Testis (tissue), 5 donors: ENCODE measurements at regions of chr2 and their contacts with region 1.

Region 1: GRCh38 chr2:221573430-221574230 is 1.5 kb upstream of the EPHA4 start:
- DNase-seq: peak; percentile 93
- H3K4me3 ChIP-seq: peak overlapping the region; percentile 72 to 73
- H3K27ac ChIP-seq: peak overlapping the region; percentile 86 to 91
- H3K4me1 ChIP-seq: peaks cover 5% of the 10 kb centered on the region
- H3K27me3 ChIP-seq: no peaks in the 10 kb centered on the region
- CTCF ChIP-seq: peak; percentile 99
- POLR2A ChIP-seq: no peak

Region 2: DNA sequence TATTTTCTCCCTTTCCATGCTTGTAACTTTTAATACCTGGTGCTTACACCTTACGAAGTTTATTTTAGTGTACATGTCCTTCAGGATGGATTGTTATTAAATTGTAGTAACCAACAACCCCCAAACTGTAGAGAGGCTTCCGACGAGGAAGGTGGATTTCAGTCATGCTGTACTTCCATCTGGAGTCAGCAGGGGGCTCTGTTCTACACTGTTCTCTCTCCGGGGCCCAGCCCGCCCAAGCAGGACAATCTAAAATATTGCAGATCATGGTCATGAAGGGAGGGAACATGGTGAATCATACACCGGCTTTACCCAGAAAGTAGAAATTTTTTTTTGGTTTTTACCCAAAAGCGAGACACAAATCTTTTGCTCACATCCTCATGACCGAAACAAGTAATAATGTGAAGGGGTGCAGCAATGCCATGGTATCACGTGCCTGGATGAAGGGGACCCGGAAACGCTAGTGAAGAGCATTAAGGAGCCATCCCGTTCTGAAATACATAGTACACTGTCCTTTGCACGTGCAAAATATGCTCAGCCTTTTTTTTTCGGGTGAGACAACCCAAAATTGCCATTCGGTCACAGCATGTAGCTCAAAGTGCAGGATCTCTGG is 886.3 kb before region 1 on chr2:
- intact Hi-C with region 1: loop called (anchors 5 kb)
- DNase-seq: peak; percentile 89
- H3K4me3 ChIP-seq: no peak overlapping the region
- H3K27ac ChIP-seq: no peak overlapping the region
- H3K4me1 ChIP-seq: no peaks in the 10 kb centered on the region
- H3K27me3 ChIP-seq: no peaks in the 10 kb centered on the region
- CTCF ChIP-seq: peak; percentile 77 to 88 (median 86)
- POLR2A ChIP-seq: no peak

Region 3: DNA sequence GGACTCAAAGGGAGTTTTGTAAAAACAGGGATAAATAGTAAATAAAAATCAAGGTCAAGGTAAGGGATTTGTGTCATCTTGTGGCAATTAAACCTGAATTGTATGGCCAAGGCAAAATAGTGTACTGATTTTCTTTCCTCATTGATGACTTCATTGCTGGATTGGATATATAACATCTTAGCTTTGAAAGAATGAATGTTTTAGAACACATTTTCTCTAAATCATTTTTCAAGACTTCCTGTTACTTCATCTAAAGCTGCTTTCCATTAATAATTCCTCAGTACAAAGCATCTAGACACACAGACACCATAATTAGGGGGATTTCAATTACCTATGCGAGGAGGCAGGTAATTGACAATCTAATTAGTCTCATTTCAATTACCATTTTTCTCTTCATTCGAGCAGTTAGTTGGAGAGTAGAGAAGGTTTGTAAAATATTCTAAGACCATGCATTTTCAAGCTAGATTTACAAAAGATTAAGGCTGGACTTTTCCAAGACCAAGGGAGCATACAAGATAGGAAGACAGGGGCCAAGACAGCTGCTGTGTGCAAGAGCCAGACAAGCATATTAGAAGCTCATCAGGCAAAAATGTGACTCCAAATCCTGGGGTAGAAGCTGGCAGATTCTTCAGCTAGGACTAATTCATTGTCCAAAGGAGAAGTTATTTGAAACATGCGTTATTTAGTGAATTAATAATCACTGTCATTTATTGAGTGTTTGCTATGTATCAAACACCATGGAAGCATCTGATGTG is 255.1 kb before region 1 on chr2:
- intact Hi-C with region 1: no loop called
- DNase-seq: no peak
- H3K4me3 ChIP-seq: no peak overlapping the region
- H3K27ac ChIP-seq: no peak overlapping the region
- H3K4me1 ChIP-seq: no peaks in the 10 kb centered on the region
- H3K27me3 ChIP-seq: no peaks in the 10 kb centered on the region
- CTCF ChIP-seq: no peak
- POLR2A ChIP-seq: no peak

Region 4: GRCh38 chr2:221724631-221725203 is 151.1 kb after region 1 on chr2:
- intact Hi-C with region 1: no loop called
- DNase-seq: no peak
- H3K4me3 ChIP-seq: no peak overlapping the region
- H3K27ac ChIP-seq: no peak overlapping the region
- H3K4me1 ChIP-seq: no peaks in the 10 kb centered on the region
- H3K27me3 ChIP-seq: no peaks in the 10 kb centered on the region
- CTCF ChIP-seq: no peak
- POLR2A ChIP-seq: no peak